Endothelial cell of umbilical vein (primary cell): ENCODE measurements at regions of chr14 and their contacts with region 1.

Region 1: GRCh38 chr14:89027097-89027740 is 202.8 kb downstream of the TTC8 start:
- DNase-seq: peak; percentile 25
- H3K4me3 ChIP-seq: peak overlapping the region; percentile 40 to 65 (median 56)
- H3K27ac ChIP-seq: no peak overlapping the region
- H3K4me1 ChIP-seq: peaks cover 9% of the 10 kb centered on the region
- H3K27me3 ChIP-seq: peaks cover 25 to 39% of the 10 kb centered on the region in 2 experiments
- CTCF ChIP-seq: peak; percentile 74 to 88
- POLR2A ChIP-seq: no peak

Region 2: GRCh38 chr14:88818018-88818417 is 209.2 kb before region 1 on chr14:
- CTCF ChIA-PET with region 1: no interaction called
- POLR2A ChIA-PET with region 1: no interaction called
- dilution Hi-C with region 1: no loop called
- intact Hi-C with region 1: no loop called
- DNase-seq: no peak
- H3K4me3 ChIP-seq: no peak overlapping the region
- H3K27ac ChIP-seq: no peak overlapping the region
- H3K4me1 ChIP-seq: no peaks in the 10 kb centered on the region
- H3K27me3 ChIP-seq: peaks cover 17 to 19% of the 10 kb centered on the region in 2 experiments
- CTCF ChIP-seq: no peak
- POLR2A ChIP-seq: no peak

Region 3: DNA sequence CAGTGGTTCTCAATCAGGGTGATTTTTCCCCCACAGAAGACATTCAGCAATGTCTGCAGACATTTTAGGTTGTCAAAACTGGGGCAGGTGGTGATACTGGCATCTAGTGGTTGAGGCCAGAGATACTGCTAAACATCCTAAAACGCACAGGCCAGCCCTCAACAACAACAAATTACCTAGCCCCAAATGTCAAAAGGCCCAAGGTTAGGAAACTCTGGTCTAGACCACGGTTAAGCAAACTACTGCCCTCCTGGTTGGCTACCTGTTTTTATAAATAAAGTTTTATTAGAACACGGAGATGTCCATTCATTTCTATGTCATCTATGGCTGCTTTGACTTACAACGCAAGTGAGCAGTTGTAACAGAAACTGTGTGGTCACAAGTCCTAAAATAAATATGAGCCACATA is 740.6 kb after region 1 on chr14:
- CTCF ChIA-PET with region 1: interaction called, 4 read pairs
- POLR2A ChIA-PET with region 1: no interaction called
- dilution Hi-C with region 1: no loop called
- intact Hi-C with region 1: loop called (anchors 5 kb)
- DNase-seq: peak; percentile 44
- H3K4me3 ChIP-seq: no peak overlapping the region
- H3K27ac ChIP-seq: no peak overlapping the region
- H3K4me1 ChIP-seq: peaks cover 17% of the 10 kb centered on the region
- H3K27me3 ChIP-seq: no peaks in the 10 kb centered on the region
- CTCF ChIP-seq: peak; percentile 45 to 65
- POLR2A ChIP-seq: no peak